ENCODE measurements at regions of chr15 and their contacts with region 1.

Region 1: GRCh38 chr15:98647774-98648653 is at the start of gene IGF1R:
- DNase-seq: peak; percentile 87
- H3K4me3 Mint-ChIP-seq: peak within 1 kb of the TSS; percentile 85
- H3K27ac Mint-ChIP-seq: peak within 1 kb of the TSS; percentile 93
- H3K4me1 Mint-ChIP-seq: peaks cover 34% of the 10 kb centered on the region
- H3K27me3 Mint-ChIP-seq: peaks cover 56% of the 10 kb centered on the region
- total RNA-seq, gene IGF1R: 38.7 and 39.8 TPM in 2 replicates

Region 2: DNA sequence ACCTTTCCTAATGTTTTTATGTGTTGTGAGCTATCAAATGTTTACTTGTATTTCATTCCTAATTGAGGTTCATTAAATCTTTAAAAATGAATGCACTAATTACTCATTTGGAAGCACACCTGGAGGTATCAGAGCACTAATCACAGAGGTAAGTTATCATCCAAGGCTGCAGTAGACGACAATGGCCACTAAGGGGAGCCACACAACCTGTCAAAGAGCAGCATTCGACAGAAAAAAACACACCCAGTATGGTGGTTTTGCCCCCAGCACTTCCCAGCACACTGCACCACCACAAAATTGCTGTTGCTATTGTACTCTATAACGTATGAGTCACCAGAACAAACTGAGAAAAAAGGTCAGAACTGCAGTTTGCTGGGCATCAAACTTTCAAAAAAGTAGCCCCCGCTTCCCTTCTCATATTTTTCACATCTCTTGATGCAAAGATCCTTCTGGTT is 205.6 kb before region 1 on chr15:
- intact Hi-C with region 1: loop called (anchors 2 kb)
- DNase-seq: peak; percentile 34
- H3K4me3 Mint-ChIP-seq: no peak overlapping the region
- H3K27ac Mint-ChIP-seq: no peak overlapping the region
- H3K4me1 Mint-ChIP-seq: peaks cover 5% of the 10 kb centered on the region
- H3K27me3 Mint-ChIP-seq: peaks cover 5% of the 10 kb centered on the region

Region 3: DNA sequence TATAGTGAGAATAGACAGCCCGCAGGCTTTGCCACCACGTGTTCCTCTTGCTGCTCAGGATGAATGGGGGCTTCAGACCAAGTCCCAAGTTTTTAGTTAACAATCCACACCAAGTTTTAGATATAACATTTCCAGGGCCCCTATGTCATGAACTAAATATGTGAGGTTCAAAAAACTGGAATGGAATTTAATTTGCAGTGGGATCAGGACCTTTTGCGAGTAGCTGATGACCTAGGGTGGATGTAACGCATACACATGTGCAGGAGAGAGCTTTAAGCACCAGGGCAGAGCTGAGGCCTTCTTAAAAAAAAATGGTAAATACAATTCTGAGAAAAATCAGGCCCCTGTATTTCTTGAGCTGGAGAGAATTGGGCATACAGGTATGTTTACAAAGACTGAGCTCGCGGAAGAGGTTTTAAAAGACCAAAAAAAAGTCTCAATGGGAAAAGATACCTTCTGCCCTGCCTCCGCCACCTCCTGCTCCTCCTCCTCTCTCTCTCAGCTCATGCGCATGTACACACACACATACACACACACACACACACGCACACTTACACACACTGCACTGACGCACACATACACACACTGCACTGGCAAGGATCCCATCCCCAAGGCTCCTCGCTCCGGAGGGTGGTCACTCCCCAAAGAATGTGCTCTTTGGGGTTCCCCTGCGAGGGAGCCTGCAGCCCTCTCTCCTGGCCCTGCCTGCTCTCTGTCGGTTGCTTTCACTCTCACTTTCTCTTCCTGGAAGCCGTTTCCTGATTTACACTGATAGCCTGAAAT is 47.9 kb before region 1 on chr15:
- intact Hi-C with region 1: loop called (anchors 1 kb)
- DNase-seq: peak; percentile 6
- H3K4me3 Mint-ChIP-seq: peak overlapping the region; percentile 82
- H3K27ac Mint-ChIP-seq: peak overlapping the region; percentile 66
- H3K4me1 Mint-ChIP-seq: peaks cover 24% of the 10 kb centered on the region
- H3K27me3 Mint-ChIP-seq: peaks cover 8% of the 10 kb centered on the region

Region 4: GRCh38 chr15:98611806-98612205 is 36.2 kb before region 1 on chr15:
- intact Hi-C with region 1: no loop called
- DNase-seq: no peak
- H3K4me3 Mint-ChIP-seq: no peak overlapping the region
- H3K27ac Mint-ChIP-seq: no peak overlapping the region
- H3K4me1 Mint-ChIP-seq: peaks cover 7% of the 10 kb centered on the region
- H3K27me3 Mint-ChIP-seq: no peaks in the 10 kb centered on the region

Region 5: DNA sequence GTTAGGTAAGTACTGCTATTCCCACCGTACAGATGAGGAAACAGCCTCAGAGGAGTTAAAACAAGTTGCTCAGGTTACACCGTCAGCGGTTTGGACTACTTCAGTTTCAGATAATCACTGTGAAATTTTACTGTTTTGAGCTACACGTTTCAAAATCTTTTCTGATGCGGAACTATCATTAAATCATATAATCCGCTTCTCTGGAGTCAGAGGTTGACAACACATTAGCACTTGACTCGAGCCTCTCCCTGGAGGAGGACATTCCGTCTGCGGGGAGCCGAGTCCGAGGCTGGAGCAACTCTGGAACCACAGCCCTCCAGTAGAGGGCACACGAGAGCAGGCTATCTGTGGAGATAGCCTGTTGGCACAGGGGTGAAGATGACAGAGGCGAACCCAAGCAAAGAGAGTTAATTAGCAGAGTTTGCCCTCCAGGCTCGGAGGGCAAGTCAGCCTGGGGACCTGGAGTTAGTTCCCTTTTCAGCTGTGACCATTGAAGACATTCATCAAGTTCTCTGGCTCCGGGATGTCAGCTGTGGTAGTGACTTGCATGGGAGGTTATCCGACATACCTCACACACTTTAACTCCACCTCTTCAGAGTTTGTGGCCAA is 131.6 kb after region 1 on chr15:
- intact Hi-C with region 1: loop called (anchors 2 kb)
- DNase-seq: peak; percentile 49
- H3K4me3 Mint-ChIP-seq: peak overlapping the region; percentile 30
- H3K27ac Mint-ChIP-seq: no peak overlapping the region
- H3K4me1 Mint-ChIP-seq: peaks cover 28% of the 10 kb centered on the region
- H3K27me3 Mint-ChIP-seq: peaks cover 5% of the 10 kb centered on the region

Region 6: GRCh38 chr15:99059010-99059981 is 411.3 kb after region 1 on chr15:
- intact Hi-C with region 1: loop called (anchors 2 kb)
- DNase-seq: peak; percentile 48
- H3K4me3 Mint-ChIP-seq: peak overlapping the region; percentile 70
- H3K27ac Mint-ChIP-seq: no peak overlapping the region
- H3K4me1 Mint-ChIP-seq: peaks cover 8% of the 10 kb centered on the region
- H3K27me3 Mint-ChIP-seq: peaks cover 29% of the 10 kb centered on the region

Region 7: DNA sequence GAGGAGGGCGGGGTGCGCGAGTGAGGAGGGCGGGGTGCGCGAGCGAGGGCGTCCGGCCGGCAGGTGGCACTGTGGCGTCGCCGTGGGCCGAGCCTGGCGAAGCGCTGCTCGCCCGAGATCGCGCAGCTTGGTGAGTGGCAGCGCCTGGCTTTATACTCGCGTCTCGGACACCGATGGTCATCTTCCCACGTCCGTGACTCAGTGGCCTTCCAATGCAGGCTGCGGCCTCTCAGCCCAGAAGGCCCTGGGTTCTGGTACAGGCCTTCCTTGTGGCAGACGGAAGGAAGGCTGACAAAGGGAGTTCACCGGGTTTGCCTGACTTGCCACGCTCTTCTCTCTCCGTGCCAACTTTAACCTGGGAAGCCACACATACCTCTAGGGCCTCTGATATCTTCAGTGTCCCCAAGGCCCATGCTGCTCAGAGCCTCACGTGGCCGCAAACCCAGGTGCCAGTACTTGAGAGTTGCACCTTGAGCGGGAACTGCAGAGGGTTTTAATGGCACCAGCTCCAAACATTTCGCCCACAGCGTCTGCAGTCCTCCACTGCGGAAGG is 1280.5 kb after region 1 on chr15:
- intact Hi-C with region 1: loop called (anchors 5 kb)
- DNase-seq: peak; percentile 87
- H3K4me3 Mint-ChIP-seq: peak overlapping the region; percentile 82
- H3K27ac Mint-ChIP-seq: peak overlapping the region; percentile 87
- H3K4me1 Mint-ChIP-seq: peaks cover 14% of the 10 kb centered on the region
- H3K27me3 Mint-ChIP-seq: peaks cover 23% of the 10 kb centered on the region

Measured in activated T-helper 1 cell treated with anti-CD3 and anti-CD28 coated beads, Interleukin-12 subunit alpha, Interleukin-12 subunit beta, Interleukin-2, Interleukin-4 antibody, amounts not matched to agents 30 ng/mL and 10 ng/mL and 1 ng/mL, durations not matched to agents 14 hours and 24 hours and 36 hours (primary cell).